AG04449 (cell line): ENCODE measurements at regions of chr9 and their contacts with region 1.

Region 1: GRCh38 chr9:34546834-34547827 is 24.3 kb upstream of the ENHO start:
- DNase-seq: no peak
- H3K4me3 ChIP-seq: no peak overlapping the region
- CTCF ChIP-seq: peak; percentile 60

Region 2: DNA sequence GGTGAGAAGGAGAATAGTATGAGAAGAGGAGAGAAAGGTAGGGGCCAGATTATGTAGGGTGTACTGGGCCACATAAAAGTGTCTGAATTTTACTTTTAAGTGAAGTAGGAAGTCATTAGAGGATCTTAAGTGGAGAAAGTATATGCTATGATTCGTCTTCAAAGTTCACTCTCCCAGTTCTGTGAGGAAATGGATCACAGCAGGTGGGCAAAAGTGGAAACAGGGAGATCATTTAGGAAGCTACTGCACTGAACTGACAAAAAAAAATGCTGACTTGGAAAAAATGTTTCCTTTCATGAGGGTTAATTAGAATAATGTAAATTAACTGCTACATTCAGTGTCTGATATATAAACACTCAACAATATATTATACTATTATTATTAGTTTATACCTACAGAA is 220.4 kb before region 1 on chr9:
- CTCF ChIA-PET with region 1: no interaction called
- POLR2A ChIA-PET with region 1: no interaction called
- DNase-seq: no peak
- H3K4me3 ChIP-seq: no peak overlapping the region
- CTCF ChIP-seq: no peak

Region 3: GRCh38 chr9:34430843-34431437 is 116.2 kb before region 1 on chr9:
- CTCF ChIA-PET with region 1: interaction called, 12 read pairs
- POLR2A ChIA-PET with region 1: no interaction called
- DNase-seq: peak; percentile 74
- H3K4me3 ChIP-seq: no peak overlapping the region
- CTCF ChIP-seq: no peak

Region 4: DNA sequence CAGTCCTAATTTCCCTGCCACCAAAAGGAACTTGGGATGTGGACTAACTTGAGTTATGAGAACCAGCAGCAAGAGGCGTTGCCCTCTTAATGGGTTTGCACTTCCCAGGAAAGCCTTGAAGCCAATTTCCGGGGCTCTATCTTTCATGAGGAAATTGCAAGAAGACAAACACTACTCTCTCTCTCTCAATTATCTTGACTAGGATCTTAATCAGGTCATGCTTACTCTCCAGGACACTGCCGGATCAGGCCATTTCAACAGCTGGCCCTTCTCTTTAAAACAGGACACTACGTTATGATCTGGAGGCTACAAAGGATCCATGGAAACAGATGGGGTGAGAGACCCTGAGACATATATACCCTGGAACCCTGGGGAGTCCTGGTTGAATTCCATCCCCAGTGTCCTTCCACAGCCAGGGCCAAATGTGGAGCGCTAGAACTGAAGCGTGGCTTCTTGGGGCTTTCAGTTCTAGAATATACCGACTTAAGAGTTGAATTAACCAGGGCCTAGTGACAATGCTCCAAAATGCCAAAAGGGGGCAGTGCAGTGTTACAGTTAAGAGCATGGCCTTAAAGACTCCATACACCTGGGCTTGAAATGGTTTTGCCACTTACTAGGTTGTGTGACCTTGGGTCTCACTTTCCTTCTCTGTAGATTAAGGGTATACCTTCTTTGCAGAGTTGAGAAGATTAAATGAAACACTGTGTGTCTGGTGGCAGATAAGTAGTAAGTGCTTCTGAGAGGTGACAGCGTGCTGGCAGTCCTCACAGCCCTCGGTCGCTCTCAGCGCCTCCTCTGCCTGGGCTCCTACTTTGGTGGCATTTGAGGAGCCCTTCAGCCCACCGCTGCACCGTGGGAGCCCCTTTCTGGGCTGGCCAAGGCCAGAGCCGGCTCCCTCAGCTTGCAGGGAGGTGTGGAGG is 109.9 kb before region 1 on chr9:
- CTCF ChIA-PET with region 1: interaction called, 21 read pairs
- POLR2A ChIA-PET with region 1: no interaction called
- DNase-seq: no peak
- H3K4me3 ChIP-seq: no peak overlapping the region
- CTCF ChIP-seq: peak; percentile 71

Region 5: DNA sequence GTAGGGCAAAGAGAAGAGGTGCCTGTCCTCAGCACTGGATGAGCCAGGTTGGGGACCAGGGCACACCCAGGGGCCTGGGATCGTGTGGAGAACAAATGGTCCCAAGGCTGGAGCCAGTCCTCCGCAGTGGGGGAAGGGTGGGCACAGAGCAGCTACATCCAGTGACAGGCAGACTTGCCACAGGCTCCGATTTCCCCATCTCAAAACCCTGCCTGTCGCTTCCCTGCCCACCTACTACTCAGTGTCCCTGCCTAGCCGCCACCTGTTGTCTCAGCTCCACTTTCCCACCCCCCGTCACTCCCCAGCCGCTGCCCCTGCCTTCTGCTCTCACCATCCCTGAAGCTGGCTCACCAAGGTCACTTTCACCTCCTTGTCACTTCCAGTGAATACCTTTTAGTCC is 10.4 kb before region 1 on chr9:
- CTCF ChIA-PET with region 1: interaction called, 22 read pairs
- POLR2A ChIA-PET with region 1: no interaction called
- DNase-seq: no peak
- H3K4me3 ChIP-seq: no peak overlapping the region
- CTCF ChIP-seq: no peak

Region 6: GRCh38 chr9:34559624-34560452 is 12.7 kb after region 1 on chr9:
- CTCF ChIA-PET with region 1: interaction called, 24 read pairs
- POLR2A ChIA-PET with region 1: no interaction called
- DNase-seq: no peak
- H3K4me3 ChIP-seq: no peak overlapping the region
- CTCF ChIP-seq: no peak

Region 7: DNA sequence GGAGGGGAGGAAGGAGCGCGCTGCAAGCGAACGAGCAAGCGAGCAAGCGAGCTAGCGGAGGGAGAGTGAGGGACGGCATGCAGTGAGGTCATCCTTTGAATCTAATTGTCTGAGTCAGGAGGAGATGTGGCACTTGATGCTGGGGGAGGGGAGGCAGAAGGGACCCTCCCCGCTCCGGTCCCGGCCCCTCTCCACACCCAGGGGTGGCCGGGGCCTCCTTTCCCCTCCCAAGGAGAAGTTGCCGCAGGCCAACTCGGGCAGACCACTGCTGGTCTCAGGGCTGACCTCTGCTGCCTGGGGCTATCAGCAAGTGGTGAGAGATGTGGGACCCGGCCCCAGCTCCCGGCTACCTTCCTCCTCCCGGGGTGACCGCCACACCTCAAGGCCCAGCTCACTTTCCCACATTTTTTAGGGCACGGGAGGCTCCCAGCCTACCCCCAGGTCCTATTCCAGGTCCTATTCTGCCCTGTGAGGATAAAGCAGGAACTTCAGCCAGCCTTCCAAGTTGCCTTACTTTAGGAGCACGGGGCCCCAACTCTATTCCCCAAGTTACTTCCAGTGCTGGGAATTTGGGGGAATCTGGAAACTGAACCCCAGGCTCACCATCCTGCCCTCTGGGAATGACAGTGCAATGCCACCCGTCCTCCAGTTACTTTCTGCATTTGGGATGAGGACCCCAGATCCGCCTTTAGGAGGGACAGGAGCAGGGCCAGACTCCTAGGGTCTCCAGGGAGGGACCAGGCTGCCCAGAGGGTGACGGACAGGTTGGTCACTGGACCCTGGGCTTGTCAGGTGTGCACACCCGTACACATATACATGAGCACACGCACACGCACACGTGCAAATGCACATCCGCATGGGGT is 31.3 kb after region 1 on chr9:
- CTCF ChIA-PET with region 1: interaction called, 13 read pairs
- POLR2A ChIA-PET with region 1: no interaction called
- DNase-seq: no peak
- H3K4me3 ChIP-seq: peak overlapping the region; percentile 27; the same call in 1 of the 2 replicates
- CTCF ChIP-seq: no peak

Region 8: GRCh38 chr9:34637356-34638137 is 90.4 kb after region 1 on chr9 and contains the start of gene SIGMAR1:
- CTCF ChIA-PET with region 1: interaction called, 16 read pairs
- POLR2A ChIA-PET with region 1: no interaction called
- DNase-seq: no peak
- H3K4me3 ChIP-seq: peak within 1 kb of the TSS; percentile 80
- CTCF ChIP-seq: no peak

Region 9: GRCh38 chr9:34994260-34994899 is 447.2 kb after region 1 on chr9:
- CTCF ChIA-PET with region 1: no interaction called
- POLR2A ChIA-PET with region 1: no interaction called
- DNase-seq: no peak
- H3K4me3 ChIP-seq: no peak overlapping the region
- CTCF ChIP-seq: peak; percentile 78

Region 10: GRCh38 chr9:35035851-35036701 is 488.9 kb after region 1 on chr9:
- CTCF ChIA-PET with region 1: no interaction called
- POLR2A ChIA-PET with region 1: no interaction called
- DNase-seq: no peak
- H3K4me3 ChIP-seq: peak overlapping the region; percentile 42
- CTCF ChIP-seq: no peak